ENCODE measurements at regions of chr1 and their contacts with region 1.

Region 1: GRCh38 chr1:240337781-240338180 is 246.1 kb downstream of the FMN2 start:
- DNase-seq: peak; percentile 67
- H3K4me3 ChIP-seq: no peak overlapping the region
- H3K27ac ChIP-seq: peak overlapping the region; percentile 33 to 77 (median 56)
- H3K4me1 ChIP-seq: peaks cover 0 to 34% (median 16%) of the 10 kb centered on the region in 4 donors
- H3K27me3 ChIP-seq: no peaks in the 10 kb centered on the region
- CTCF ChIP-seq: no peak
- EP300 ChIP-seq: peak in 3 of 4 donors; percentile 30 to 54 (median 45)
- POLR2A ChIP-seq: no peak

Region 2: DNA sequence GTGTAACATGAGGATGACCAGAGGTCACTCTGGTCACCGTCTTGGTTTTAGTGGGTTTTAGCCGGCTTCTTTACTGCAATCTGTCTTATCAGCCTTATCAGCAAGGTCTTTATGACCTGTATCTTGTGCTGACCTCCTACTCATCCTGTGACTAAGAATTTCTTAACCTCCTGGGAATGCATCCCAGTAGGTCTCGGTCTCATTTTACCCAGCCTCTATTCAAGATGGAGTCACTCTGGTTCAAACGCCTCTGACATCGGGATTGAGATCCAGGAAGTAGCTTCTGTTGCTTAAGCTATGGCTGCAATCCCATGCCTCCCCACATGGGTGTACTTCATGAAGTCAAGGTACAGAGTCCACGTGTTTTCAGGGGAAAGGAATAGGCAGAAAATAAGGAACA is 226.2 kb before region 1 on chr1:
- intact Hi-C with region 1: loop called (anchors 10 kb)
- DNase-seq: no peak
- H3K4me3 ChIP-seq: no peak overlapping the region
- H3K27ac ChIP-seq: peak overlapping the region in 3 of 4 donors; percentile 68 to 80 (median 71)
- H3K4me1 ChIP-seq: peaks cover 0 to 74% (median 21%) of the 10 kb centered on the region in 4 donors
- H3K27me3 ChIP-seq: peaks cover 0 to 4% (median 0%) of the 10 kb centered on the region in 3 donors
- CTCF ChIP-seq: no peak
- EP300 ChIP-seq: no peak
- POLR2A ChIP-seq: no peak

Region 3: DNA sequence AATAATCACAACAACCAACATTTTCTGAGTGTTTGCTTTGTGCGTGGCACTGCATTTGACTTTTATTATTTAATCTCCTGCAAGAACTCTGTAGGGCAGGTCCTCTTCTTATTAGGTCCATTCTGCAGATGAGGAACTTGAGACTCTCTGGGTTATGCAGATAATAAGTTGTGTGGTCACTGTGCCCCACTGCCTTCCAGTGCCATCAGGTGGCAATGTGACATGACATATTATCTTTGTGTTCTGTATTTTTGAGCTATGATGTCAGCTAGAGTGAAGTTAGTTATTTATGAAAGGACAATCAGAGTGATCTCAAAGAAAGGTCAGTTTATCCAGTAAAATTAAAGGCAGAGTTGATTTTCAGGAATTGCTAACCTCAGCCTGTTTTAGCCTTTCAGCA is 50.1 kb before region 1 on chr1:
- intact Hi-C with region 1: no loop called
- DNase-seq: no peak
- H3K4me3 ChIP-seq: no peak overlapping the region
- H3K27ac ChIP-seq: no peak overlapping the region
- H3K4me1 ChIP-seq: peaks cover 0 to 7% (median 5%) of the 10 kb centered on the region in 4 donors
- H3K27me3 ChIP-seq: no peaks in the 10 kb centered on the region
- CTCF ChIP-seq: no peak
- EP300 ChIP-seq: no peak
- POLR2A ChIP-seq: no peak

Region 4: DNA sequence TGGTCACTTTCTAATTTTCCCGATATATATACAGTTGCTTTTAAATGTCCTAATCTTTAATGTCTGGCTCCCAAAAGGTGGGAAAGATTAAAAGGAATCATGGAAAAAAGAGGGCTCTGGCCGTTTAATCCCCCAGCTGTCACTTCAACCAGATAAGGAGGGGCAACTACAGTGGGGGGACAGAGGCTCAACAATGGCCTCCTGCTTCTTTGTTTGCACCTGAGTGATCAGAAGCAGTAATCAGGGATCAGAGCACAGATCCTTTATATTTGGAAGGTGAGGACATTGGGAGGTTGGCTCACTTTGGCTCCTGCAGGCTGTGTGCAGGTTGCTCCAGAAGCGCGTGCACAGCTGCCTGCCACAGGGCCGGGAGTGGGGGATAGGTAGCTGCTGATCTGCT is 33.3 kb before region 1 on chr1:
- intact Hi-C with region 1: no loop called
- DNase-seq: no peak
- H3K4me3 ChIP-seq: no peak overlapping the region
- H3K27ac ChIP-seq: no peak overlapping the region
- H3K4me1 ChIP-seq: peaks cover 0 to 12% (median 2%) of the 10 kb centered on the region in 4 donors
- H3K27me3 ChIP-seq: no peaks in the 10 kb centered on the region
- CTCF ChIP-seq: no peak
- EP300 ChIP-seq: no peak
- POLR2A ChIP-seq: no peak

Measured in sigmoid colon (tissue), 7 donors.